Activated B cell treated with CpG ODN at 0.5 μM for 24 hours (primary cell): ENCODE measurements at regions of chr5 and their contacts with region 1.

Region 1: GRCh38 chr5:131530706-131531331 is 104.2 kb downstream of the RAPGEF6 start:
- DNase-seq: no peak
- ATAC-seq: no peak
- H3K4me3 Mint-ChIP-seq: no peak overlapping the region
- H3K27ac Mint-ChIP-seq: no peak overlapping the region
- H3K4me1 Mint-ChIP-seq: peaks cover 33% of the 10 kb centered on the region
- H3K27me3 Mint-ChIP-seq: no peaks in the 10 kb centered on the region
- CTCF ChIP-seq: no peak

Region 2: GRCh38 chr5:131514316-131515283 is 16.2 kb before region 1 on chr5:
- CTCF ChIA-PET with region 1: no interaction called
- POLR2A ChIA-PET with region 1: interaction called, 7 read pairs
- intact Hi-C with region 1: loop called (anchors 2 kb)
- DNase-seq: no peak
- ATAC-seq: no peak
- H3K4me3 Mint-ChIP-seq: peak overlapping the region; percentile 61
- H3K27ac Mint-ChIP-seq: peak overlapping the region; percentile 30
- H3K4me1 Mint-ChIP-seq: peaks cover 23% of the 10 kb centered on the region
- H3K27me3 Mint-ChIP-seq: no peaks in the 10 kb centered on the region
- CTCF ChIP-seq: no peak